ENCODE measurements at regions of chr7 and their contacts with region 1.

Region 1: DNA sequence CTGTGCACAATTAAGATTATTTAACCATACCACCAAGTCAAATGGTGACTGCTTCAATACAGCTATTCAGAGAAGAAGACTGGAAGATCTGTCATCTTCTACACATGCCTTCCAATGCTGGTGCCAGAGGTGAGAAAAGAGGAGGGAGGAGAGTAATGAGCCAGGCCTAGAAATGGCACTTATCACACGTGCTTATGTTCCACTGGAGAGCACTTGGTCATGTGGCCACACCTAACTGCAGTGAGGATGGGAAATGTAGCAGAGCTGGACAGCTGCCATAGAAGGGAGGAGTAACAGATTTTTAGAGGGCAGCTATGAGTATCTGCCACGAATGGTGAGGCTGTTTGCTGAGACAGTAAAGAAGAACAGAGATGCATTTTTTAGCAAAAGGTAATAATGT is 77.1 kb downstream of the MPLKIP start:
- DNase-seq: no peak
- ATAC-seq: no peak
- H3K4me3 ChIP-seq: no peak overlapping the region
- H3K4me3 Mint-ChIP-seq: no peak overlapping the region
- H3K27ac ChIP-seq: no peak overlapping the region
- H3K27ac Mint-ChIP-seq: no peak overlapping the region
- H3K4me1 ChIP-seq: no peaks in the 10 kb centered on the region
- H3K4me1 Mint-ChIP-seq: peaks cover 12% of the 10 kb centered on the region
- H3K27me3 ChIP-seq: no peaks in the 10 kb centered on the region
- H3K27me3 Mint-ChIP-seq: no peaks in the 10 kb centered on the region
- CTCF ChIP-seq: no peak

Region 2: GRCh38 chr7:39453743-39454355 is 603.4 kb before region 1 on chr7:
- CTCF ChIA-PET with region 1: no interaction called
- POLR2A ChIA-PET with region 1: no interaction called
- intact Hi-C with region 1: loop called in 1 of 2 experiments (anchors 2 kb)
- DNase-seq: peak in 13 of 14 experiments; percentile 3 to 69 (median 25)
- ATAC-seq: peak; percentile 55
- H3K4me3 ChIP-seq: no peak overlapping the region
- H3K4me3 Mint-ChIP-seq: no peak overlapping the region
- H3K27ac ChIP-seq: no peak overlapping the region
- H3K27ac Mint-ChIP-seq: no peak overlapping the region
- H3K4me1 ChIP-seq: no peaks in the 10 kb centered on the region
- H3K4me1 Mint-ChIP-seq: no peaks in the 10 kb centered on the region
- H3K27me3 ChIP-seq: peaks cover 3 to 5% of the 10 kb centered on the region in 2 experiments
- H3K27me3 Mint-ChIP-seq: peaks cover 6% of the 10 kb centered on the region
- CTCF ChIP-seq: peak; percentile 71

Region 3: GRCh38 chr7:39580149-39580874 is 477.0 kb before region 1 on chr7:
- CTCF ChIA-PET with region 1: interaction called, 8 read pairs
- POLR2A ChIA-PET with region 1: no interaction called
- intact Hi-C with region 1: loop called (anchors 1 to 5 kb)
- DNase-seq: peak; percentile 60 to 92 (median 70)
- ATAC-seq: peak; percentile 96
- H3K4me3 ChIP-seq: no peak overlapping the region
- H3K4me3 Mint-ChIP-seq: no peak overlapping the region
- H3K27ac ChIP-seq: no peak overlapping the region
- H3K27ac Mint-ChIP-seq: no peak overlapping the region
- H3K4me1 ChIP-seq: no peaks in the 10 kb centered on the region
- H3K4me1 Mint-ChIP-seq: peaks cover 9% of the 10 kb centered on the region
- H3K27me3 ChIP-seq: no peaks in the 10 kb centered on the region
- H3K27me3 Mint-ChIP-seq: no peaks in the 10 kb centered on the region
- CTCF ChIP-seq: peak; percentile 75

Region 4: GRCh38 chr7:39894904-39895303 is 162.4 kb before region 1 on chr7:
- CTCF ChIA-PET with region 1: interaction called, 57 read pairs
- POLR2A ChIA-PET with region 1: interaction called, 11 read pairs
- intact Hi-C with region 1: loop called (anchors 1 kb)
- DNase-seq: no peak
- ATAC-seq: no peak
- H3K4me3 ChIP-seq: no peak overlapping the region
- H3K4me3 Mint-ChIP-seq: no peak overlapping the region
- H3K27ac ChIP-seq: no peak overlapping the region
- H3K27ac Mint-ChIP-seq: no peak overlapping the region
- H3K4me1 ChIP-seq: peaks cover 3% of the 10 kb centered on the region
- H3K4me1 Mint-ChIP-seq: no peaks in the 10 kb centered on the region
- H3K27me3 ChIP-seq: peaks cover 3 to 8% of the 10 kb centered on the region in 2 experiments
- H3K27me3 Mint-ChIP-seq: peaks cover 11% of the 10 kb centered on the region
- CTCF ChIP-seq: no peak

Region 5: DNA sequence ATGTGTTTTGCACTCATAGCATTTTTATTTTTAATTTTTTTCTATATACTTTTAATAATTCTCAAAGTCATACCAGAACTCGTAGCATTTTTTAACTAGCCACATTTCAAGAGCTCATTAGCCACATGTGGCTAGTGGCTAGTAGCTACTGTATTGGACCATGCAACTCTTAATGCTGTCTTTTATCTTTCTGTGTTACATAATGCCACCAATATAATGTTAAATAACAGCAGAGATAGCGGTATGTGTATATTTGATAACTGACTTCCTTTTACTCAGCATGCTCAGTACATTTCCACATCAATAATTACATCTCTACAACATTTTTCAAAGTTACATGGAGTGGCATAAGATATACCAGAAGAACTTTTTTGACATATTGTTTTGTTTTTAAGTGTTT is 15.8 kb before region 1 on chr7:
- CTCF ChIA-PET with region 1: interaction called, 12 read pairs
- POLR2A ChIA-PET with region 1: no interaction called
- intact Hi-C with region 1: no loop called
- DNase-seq: no peak
- ATAC-seq: no peak
- H3K4me3 ChIP-seq: no peak overlapping the region
- H3K4me3 Mint-ChIP-seq: no peak overlapping the region
- H3K27ac ChIP-seq: no peak overlapping the region
- H3K27ac Mint-ChIP-seq: peak overlapping the region; percentile 55
- H3K4me1 ChIP-seq: no peaks in the 10 kb centered on the region
- H3K4me1 Mint-ChIP-seq: peaks cover 14% of the 10 kb centered on the region
- H3K27me3 ChIP-seq: no peaks in the 10 kb centered on the region
- H3K27me3 Mint-ChIP-seq: no peaks in the 10 kb centered on the region
- CTCF ChIP-seq: no peak

Region 6: DNA sequence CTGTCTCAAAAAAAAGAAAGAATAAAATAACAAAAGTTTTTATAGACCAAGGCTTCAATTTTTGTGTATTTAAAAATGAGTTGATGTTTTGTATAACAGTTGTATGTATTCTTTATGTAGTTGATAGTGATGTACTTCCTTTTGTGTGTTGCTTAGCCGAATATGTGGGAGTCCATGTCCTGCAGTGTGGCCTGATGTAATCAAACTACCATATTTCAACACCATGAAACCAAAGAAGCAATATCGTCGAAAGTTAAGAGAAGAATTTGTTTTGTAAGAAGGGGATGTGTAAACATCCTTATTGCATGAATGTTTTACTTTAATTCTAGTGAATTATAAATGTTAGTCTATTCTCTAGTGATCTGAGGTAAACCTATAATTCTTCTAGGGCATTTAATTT is 20.6 kb after region 1 on chr7:
- CTCF ChIA-PET with region 1: no interaction called
- POLR2A ChIA-PET with region 1: no interaction called
- intact Hi-C with region 1: no loop called
- DNase-seq: no peak
- ATAC-seq: no peak
- H3K4me3 ChIP-seq: no peak overlapping the region
- H3K4me3 Mint-ChIP-seq: no peak overlapping the region
- H3K27ac ChIP-seq: no peak overlapping the region
- H3K27ac Mint-ChIP-seq: no peak overlapping the region
- H3K4me1 ChIP-seq: no peaks in the 10 kb centered on the region
- H3K4me1 Mint-ChIP-seq: no peaks in the 10 kb centered on the region
- H3K27me3 ChIP-seq: no peaks in the 10 kb centered on the region
- H3K27me3 Mint-ChIP-seq: no peaks in the 10 kb centered on the region
- CTCF ChIP-seq: no peak

Region 7: GRCh38 chr7:40749877-40750276 is 692.6 kb after region 1 on chr7:
- CTCF ChIA-PET with region 1: no interaction called
- POLR2A ChIA-PET with region 1: no interaction called
- intact Hi-C with region 1: no loop called
- DNase-seq: no peak
- ATAC-seq: no peak
- H3K4me3 ChIP-seq: no peak overlapping the region
- H3K4me3 Mint-ChIP-seq: no peak overlapping the region
- H3K27ac ChIP-seq: no peak overlapping the region
- H3K27ac Mint-ChIP-seq: no peak overlapping the region
- H3K4me1 ChIP-seq: no peaks in the 10 kb centered on the region
- H3K4me1 Mint-ChIP-seq: no peaks in the 10 kb centered on the region
- H3K27me3 ChIP-seq: no peaks in the 10 kb centered on the region
- H3K27me3 Mint-ChIP-seq: no peaks in the 10 kb centered on the region
- CTCF ChIP-seq: no peak

Measured in CD4-positive, alpha-beta T cell (primary cell).